ENCODE measurements at regions of chr6 and their contacts with region 1.

Region 1: GRCh38 chr6:106300944-106301343 is 24.6 kb downstream of the ATG5 start:
- DNase-seq: peak; percentile 29
- H3K4me3 ChIP-seq: no peak overlapping the region; a peak in 1 of 4 replicates
- H3K27ac ChIP-seq: no peak overlapping the region
- H3K4me1 ChIP-seq: peaks cover 0 to 10% of the 10 kb centered on the region in 2 experiments; a peak in 3 of 4 replicates
- H3K27me3 ChIP-seq: no peaks in the 10 kb centered on the region
- CTCF ChIP-seq: peak; percentile 80
- EP300 ChIP-seq: no peak
- RAD21 ChIP-seq: peak; percentile 82

Region 2: GRCh38 chr6:105484238-105485161 is 816.4 kb before region 1 on chr6:
- CTCF ChIA-PET with region 1: interaction called, 11 read pairs
- POLR2A ChIA-PET with region 1: no interaction called
- DNase-seq: peak; percentile 25
- H3K4me3 ChIP-seq: no peak overlapping the region
- H3K27ac ChIP-seq: peak overlapping the region in 1 of 2 experiments; percentile 53; a peak in 2 of 4 replicates
- H3K4me1 ChIP-seq: peaks cover 2 to 17% of the 10 kb centered on the region in 2 experiments
- H3K27me3 ChIP-seq: no peaks in the 10 kb centered on the region
- CTCF ChIP-seq: peak; percentile 99
- EP300 ChIP-seq: no peak
- RAD21 ChIP-seq: peak; percentile 91

Region 3: GRCh38 chr6:105992315-105992961 is 308.5 kb before region 1 on chr6:
- CTCF ChIA-PET with region 1: interaction called, 11 read pairs
- POLR2A ChIA-PET with region 1: no interaction called
- DNase-seq: peak; percentile 95
- H3K4me3 ChIP-seq: peak overlapping the region; percentile 78 to 81
- H3K27ac ChIP-seq: peak overlapping the region; percentile 43 to 86
- H3K4me1 ChIP-seq: peaks cover 6 to 16% of the 10 kb centered on the region in 2 experiments; a peak in 2 of 4 replicates
- H3K27me3 ChIP-seq: no peaks in the 10 kb centered on the region
- CTCF ChIP-seq: no peak
- EP300 ChIP-seq: no peak
- RAD21 ChIP-seq: no peak

Region 4: DNA sequence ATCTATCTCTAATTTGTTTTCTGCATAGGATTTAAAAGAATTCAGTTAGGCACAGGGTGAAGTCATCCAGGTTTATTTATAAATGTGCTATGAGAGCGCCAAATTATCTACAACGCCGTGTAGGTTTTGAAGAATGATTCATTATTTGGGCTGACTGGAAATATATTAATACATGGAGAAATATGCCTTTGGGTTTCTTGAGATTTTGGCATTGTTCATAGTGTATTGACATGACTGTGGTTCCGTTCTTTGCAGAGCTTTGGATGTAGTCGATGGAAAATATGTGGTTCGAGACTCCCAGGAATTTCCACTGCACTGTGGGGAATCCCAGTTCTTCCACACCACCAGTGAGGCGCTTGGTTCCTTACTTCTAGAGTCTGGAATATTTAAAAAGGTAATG is 150.5 kb after region 1 on chr6:
- CTCF ChIA-PET with region 1: no interaction called
- POLR2A ChIA-PET with region 1: no interaction called
- DNase-seq: no peak
- H3K4me3 ChIP-seq: no peak overlapping the region
- H3K27ac ChIP-seq: peak overlapping the region in 1 of 2 experiments; percentile 57; a peak in 2 of 4 replicates
- H3K4me1 ChIP-seq: peaks cover 0 to 4% of the 10 kb centered on the region in 2 experiments; a peak in 1 of 4 replicates
- H3K27me3 ChIP-seq: no peaks in the 10 kb centered on the region
- CTCF ChIP-seq: no peak
- EP300 ChIP-seq: 0 out of 4 replicates have a peak, but pooled peaks of 1 of the 2 experiments have one; percentile 37
- RAD21 ChIP-seq: no peak

Region 5: GRCh38 chr6:106488494-106489370 is 187.8 kb after region 1 on chr6:
- CTCF ChIA-PET with region 1: no interaction called
- POLR2A ChIA-PET with region 1: no interaction called
- DNase-seq: no peak
- H3K4me3 ChIP-seq: no peak overlapping the region
- H3K27ac ChIP-seq: no peak overlapping the region
- H3K4me1 ChIP-seq: 0 out of 4 replicates have a peak, but pooled peaks cover 0 to 4% of the 10 kb centered on the region in 2 experiments
- H3K27me3 ChIP-seq: no peaks in the 10 kb centered on the region
- CTCF ChIP-seq: no peak
- EP300 ChIP-seq: no peak
- RAD21 ChIP-seq: no peak